ENCODE measurements at regions of chr18 and their contacts with region 1.

Region 1: GRCh38 chr18:48410095-48410920 is 1.1 kb upstream of the ZBTB7C start:
- DNase-seq: peak; percentile 69
- H3K4me3 Mint-ChIP-seq: peak overlapping the region; percentile 51
- H3K27ac Mint-ChIP-seq: no peak overlapping the region
- H3K4me1 Mint-ChIP-seq: peaks cover 5% of the 10 kb centered on the region
- H3K27me3 Mint-ChIP-seq: peaks cover 74% of the 10 kb centered on the region

Region 2: GRCh38 chr18:48136531-48137332 is 273.6 kb before region 1 on chr18:
- intact Hi-C with region 1: loop called (anchors 10 kb)
- DNase-seq: no peak
- H3K4me3 Mint-ChIP-seq: peak overlapping the region; percentile 57
- H3K27ac Mint-ChIP-seq: peak overlapping the region; percentile 66
- H3K4me1 Mint-ChIP-seq: peaks cover 27% of the 10 kb centered on the region
- H3K27me3 Mint-ChIP-seq: peaks cover 77% of the 10 kb centered on the region